B cell (primary cell): ENCODE measurements at regions of chr14 and their contacts with region 1.

Region 1: GRCh38 chr14:50532502-50533240 is at the start of gene MAP4K5:
- DNase-seq: peak; percentile 94
- ATAC-seq: peak; percentile 91
- H3K4me3 ChIP-seq: peak within 1 kb of the TSS; percentile 62 to 89 (median 76)
- H3K4me3 Mint-ChIP-seq: peak within 1 kb of the TSS; percentile 93
- H3K27ac ChIP-seq: peak within 1 kb of the TSS; percentile 83 to 88
- H3K27ac Mint-ChIP-seq: peak within 1 kb of the TSS; percentile 95
- H3K4me1 ChIP-seq: peaks cover 18 to 37% of the 10 kb centered on the region in 2 donors
- H3K4me1 Mint-ChIP-seq: peaks cover 47% of the 10 kb centered on the region
- H3K27me3 ChIP-seq: no peaks in the 10 kb centered on the region
- H3K27me3 Mint-ChIP-seq: no peaks in the 10 kb centered on the region
- CTCF ChIP-seq: peak; percentile 79
- total RNA-seq, gene MAP4K5: 58.2 and 60.0 TPM in 2 replicates

Region 2: GRCh38 chr14:49852301-49853157 is 680.1 kb before region 1 on chr14 and contains the start of gene NEMF:
- CTCF ChIA-PET with region 1: interaction called, 3 read pairs
- POLR2A ChIA-PET with region 1: no interaction called
- intact Hi-C with region 1: loop called (anchors 5 kb)
- DNase-seq: peak; percentile 94
- ATAC-seq: peak; percentile 84
- H3K4me3 ChIP-seq: peak within 1 kb of the TSS; percentile 78 to 99 (median 99)
- H3K4me3 Mint-ChIP-seq: peak within 1 kb of the TSS; percentile 98
- H3K27ac ChIP-seq: peak within 1 kb of the TSS; percentile 72 to 88
- H3K27ac Mint-ChIP-seq: peak within 1 kb of the TSS; percentile 98
- H3K4me1 ChIP-seq: peaks cover 20 to 31% of the 10 kb centered on the region in 2 donors
- H3K4me1 Mint-ChIP-seq: peaks cover 44% of the 10 kb centered on the region
- H3K27me3 ChIP-seq: no peaks in the 10 kb centered on the region
- H3K27me3 Mint-ChIP-seq: no peaks in the 10 kb centered on the region
- CTCF ChIP-seq: peak; percentile 86
- total RNA-seq, gene NEMF: 127 and 146 TPM in 2 replicates

Region 3: GRCh38 chr14:50116181-50116956 is 416.3 kb before region 1 on chr14 and contains the start of gene VCPKMT:
- CTCF ChIA-PET with region 1: no interaction called
- POLR2A ChIA-PET with region 1: interaction called, 15 read pairs
- intact Hi-C with region 1: loop called (anchors 2 kb)
- DNase-seq: peak; percentile 97
- ATAC-seq: peak; percentile 97
- H3K4me3 ChIP-seq: peak within 1 kb of the TSS; percentile 69 to 92 (median 87)
- H3K4me3 Mint-ChIP-seq: peak within 1 kb of the TSS; percentile 98
- H3K27ac ChIP-seq: peak within 1 kb of the TSS; percentile 92 to 99
- H3K27ac Mint-ChIP-seq: peak within 1 kb of the TSS; percentile 98
- H3K4me1 ChIP-seq: peaks cover 44 to 45% of the 10 kb centered on the region in 2 donors
- H3K4me1 Mint-ChIP-seq: peaks cover 45% of the 10 kb centered on the region
- H3K27me3 ChIP-seq: no peaks in the 10 kb centered on the region
- H3K27me3 Mint-ChIP-seq: no peaks in the 10 kb centered on the region
- CTCF ChIP-seq: no peak
- total RNA-seq, gene VCPKMT: 22.8 and 27.1 TPM in 2 replicates

Region 4: DNA sequence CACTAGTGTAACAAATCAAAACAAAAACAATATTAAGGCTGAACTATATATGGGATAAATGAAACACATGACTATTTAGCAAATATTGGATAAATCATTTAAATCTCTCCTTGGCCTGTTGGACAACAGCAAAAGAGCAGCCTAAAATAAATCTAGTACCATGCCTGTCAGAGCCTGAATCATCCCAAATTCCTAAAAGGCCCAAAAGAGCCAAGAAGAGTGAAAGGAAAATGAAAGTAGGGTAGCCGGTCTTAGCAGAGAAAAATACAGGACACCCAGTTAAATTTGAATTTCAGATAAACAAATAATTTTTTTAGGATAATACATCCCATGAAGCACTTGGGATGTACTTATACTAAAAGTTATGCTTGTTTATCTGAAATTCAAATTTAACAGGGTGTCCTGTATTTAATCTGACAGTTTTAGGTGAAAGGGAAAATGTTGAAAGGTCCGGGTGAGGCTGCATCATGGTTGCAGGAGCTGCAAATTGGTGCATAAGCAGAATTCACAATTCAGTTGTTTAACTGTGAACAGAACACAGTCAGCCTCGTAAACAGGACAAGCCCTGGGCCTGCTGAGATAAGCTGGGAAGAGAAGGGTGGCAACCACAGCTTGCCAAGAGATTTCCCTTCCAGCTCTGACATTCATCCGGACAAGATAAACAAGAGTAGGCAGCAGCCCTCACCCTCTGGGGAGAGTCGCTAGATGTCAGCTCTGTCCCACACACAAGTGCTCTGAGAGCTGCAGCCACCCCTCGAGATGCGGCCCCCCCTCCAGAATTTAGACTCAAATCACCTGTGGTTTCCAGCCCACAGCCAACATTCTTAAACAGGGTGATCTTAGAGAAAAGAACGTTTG is 190.2 kb before region 1 on chr14:
- CTCF ChIA-PET with region 1: interaction called, 7 read pairs
- POLR2A ChIA-PET with region 1: no interaction called
- intact Hi-C with region 1: loop called (anchors 2 kb)
- DNase-seq: peak; percentile 70
- ATAC-seq: peak; percentile 67
- H3K4me3 ChIP-seq: no peak overlapping the region
- H3K4me3 Mint-ChIP-seq: no peak overlapping the region
- H3K27ac ChIP-seq: no peak overlapping the region
- H3K27ac Mint-ChIP-seq: no peak overlapping the region
- H3K4me1 ChIP-seq: peaks cover 5 to 8% of the 10 kb centered on the region in 2 donors
- H3K4me1 Mint-ChIP-seq: peaks cover 13% of the 10 kb centered on the region
- H3K27me3 ChIP-seq: no peaks in the 10 kb centered on the region
- H3K27me3 Mint-ChIP-seq: no peaks in the 10 kb centered on the region
- CTCF ChIP-seq: peak; percentile 44

Region 5: GRCh38 chr14:50489489-50490250 is 43.0 kb before region 1 on chr14:
- CTCF ChIA-PET with region 1: no interaction called
- POLR2A ChIA-PET with region 1: no interaction called
- intact Hi-C with region 1: no loop called
- DNase-seq: no peak
- ATAC-seq: no peak
- H3K4me3 ChIP-seq: no peak overlapping the region
- H3K4me3 Mint-ChIP-seq: no peak overlapping the region
- H3K27ac ChIP-seq: no peak overlapping the region
- H3K27ac Mint-ChIP-seq: no peak overlapping the region
- H3K4me1 ChIP-seq: no peaks in the 10 kb centered on the region
- H3K4me1 Mint-ChIP-seq: peaks cover 8% of the 10 kb centered on the region
- H3K27me3 ChIP-seq: no peaks in the 10 kb centered on the region
- H3K27me3 Mint-ChIP-seq: no peaks in the 10 kb centered on the region
- CTCF ChIP-seq: no peak

Region 6: DNA sequence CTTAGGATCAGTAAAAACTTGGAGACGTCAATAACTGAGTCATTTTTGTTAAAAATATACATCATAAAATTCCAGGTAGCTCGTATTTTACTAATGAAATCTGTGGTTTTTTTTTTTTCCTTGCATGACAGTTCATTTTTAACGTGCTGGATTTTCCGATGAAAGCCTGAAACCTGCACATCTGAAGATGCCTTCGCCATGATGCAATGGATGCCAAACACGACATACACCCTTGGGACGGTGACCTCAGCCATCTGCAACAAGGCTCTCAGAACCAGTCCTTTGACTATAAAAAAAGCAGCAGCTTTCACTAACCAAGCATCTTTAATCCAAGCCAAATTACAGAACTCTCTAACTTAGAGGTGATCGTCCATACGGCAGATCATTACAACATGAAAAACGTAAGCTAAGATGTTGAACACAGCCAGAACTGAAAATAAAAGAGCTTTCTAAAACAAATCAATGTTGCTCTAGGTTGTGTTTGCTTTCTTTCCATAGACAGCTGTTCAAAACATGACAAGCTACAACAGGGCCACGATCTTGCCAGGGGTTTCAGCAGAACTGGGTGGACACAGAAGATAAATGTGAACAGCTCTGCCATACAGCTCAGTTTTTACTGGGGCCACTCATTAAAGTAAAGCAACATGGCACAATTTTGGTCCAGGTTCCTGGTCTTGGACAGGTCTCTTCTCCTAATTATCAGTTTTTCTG is 290.5 kb after region 1 on chr14:
- CTCF ChIA-PET with region 1: no interaction called
- POLR2A ChIA-PET with region 1: no interaction called
- intact Hi-C with region 1: loop called (anchors 5 kb)
- DNase-seq: peak; percentile 52
- ATAC-seq: peak; percentile 41
- H3K4me3 ChIP-seq: peak overlapping the region; percentile 23 to 60 (median 42)
- H3K4me3 Mint-ChIP-seq: peak overlapping the region; percentile 85
- H3K27ac ChIP-seq: peak overlapping the region; percentile 71 to 92
- H3K27ac Mint-ChIP-seq: peak overlapping the region; percentile 92
- H3K4me1 ChIP-seq: peaks cover 78 to 86% of the 10 kb centered on the region in 2 donors
- H3K4me1 Mint-ChIP-seq: peaks cover 91% of the 10 kb centered on the region
- H3K27me3 ChIP-seq: no peaks in the 10 kb centered on the region
- H3K27me3 Mint-ChIP-seq: no peaks in the 10 kb centered on the region
- CTCF ChIP-seq: no peak